ENCODE measurements at regions of chr11 and their contacts with region 1.

Region 1: DNA sequence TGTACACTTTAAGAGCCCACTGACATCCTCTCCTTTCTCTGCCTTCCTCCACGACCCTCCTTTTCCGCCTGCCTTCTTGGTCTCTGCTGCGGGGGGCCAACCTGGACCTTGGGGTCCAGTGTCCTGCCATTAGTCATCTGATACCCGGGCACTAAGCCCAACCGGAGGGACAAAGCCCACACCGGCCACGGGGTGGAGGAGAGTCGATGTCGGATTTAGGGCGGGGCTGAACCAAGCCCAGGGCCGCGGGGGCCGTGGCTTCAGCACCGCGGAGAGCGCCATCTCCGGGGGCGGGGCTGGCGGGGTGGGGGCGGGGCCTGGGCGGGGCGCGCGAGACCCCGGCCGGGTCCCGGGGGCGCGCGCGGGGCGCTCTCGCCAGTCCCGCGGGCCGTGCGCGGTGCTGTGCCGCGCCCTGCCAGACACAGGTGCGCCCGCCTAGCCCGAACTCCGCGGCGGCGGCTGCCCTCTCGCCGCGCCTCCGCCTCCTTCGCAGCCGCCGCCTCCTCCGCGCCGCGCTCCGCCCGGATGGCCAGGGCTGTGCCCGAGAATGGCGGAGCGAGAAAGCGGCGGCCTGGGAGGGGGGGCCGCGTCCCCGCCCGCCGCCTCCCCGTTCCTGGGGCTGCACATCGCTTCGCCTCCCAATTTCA is at the start of gene MAPK8IP1:
- DNase-seq: peak; percentile 68
- ATAC-seq: peak; percentile 89
- H3K4me3 Mint-ChIP-seq: peak within 1 kb of the TSS; percentile 66
- H3K27ac Mint-ChIP-seq: no peak within 1 kb of the TSS
- H3K4me1 Mint-ChIP-seq: peaks cover 8% of the 10 kb centered on the region
- H3K27me3 Mint-ChIP-seq: peaks cover 3% of the 10 kb centered on the region
- total RNA-seq, gene MAPK8IP1: 0.37 to 0.39 TPM

Region 2: DNA sequence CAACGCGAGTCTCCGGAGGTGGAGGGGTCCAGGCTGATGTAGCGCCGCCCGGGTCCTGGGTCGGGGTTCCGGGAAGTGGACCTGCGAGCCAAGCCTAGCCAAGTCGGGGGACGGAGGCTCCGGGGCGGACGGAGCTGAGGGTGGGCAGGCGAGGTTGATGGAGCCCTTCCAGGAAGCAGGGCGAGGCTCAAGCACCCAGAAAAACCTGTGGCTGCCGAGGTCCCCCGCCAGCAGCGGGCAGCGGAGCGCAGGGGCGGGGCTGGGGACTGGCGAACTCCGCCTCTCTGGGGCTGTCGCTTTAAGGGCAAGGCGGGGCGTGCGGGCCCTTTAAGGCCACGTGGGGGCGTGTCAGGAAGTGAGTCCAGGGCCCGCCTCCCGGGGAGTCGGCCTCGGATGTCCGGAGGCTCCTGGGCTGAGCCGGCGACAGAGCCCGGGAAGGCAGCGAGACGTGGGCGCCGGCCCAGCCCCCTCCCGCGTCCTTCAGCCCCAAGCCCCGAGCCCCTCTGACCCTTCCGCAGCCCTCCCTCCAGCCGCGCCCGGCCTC is 80.6 kb before region 1 on chr11 and contains the start of gene SLC35C1:
- CTCF ChIA-PET with region 1: no interaction called
- POLR2A ChIA-PET with region 1: no interaction called
- intact Hi-C with region 1: loop called in 1 of 2 experiments (anchors 1 kb)
- DNase-seq: peak; percentile 98
- ATAC-seq: peak; percentile 97
- H3K4me3 Mint-ChIP-seq: peak within 1 kb of the TSS; percentile 91
- H3K27ac Mint-ChIP-seq: peak within 1 kb of the TSS; percentile 86
- H3K4me1 Mint-ChIP-seq: peaks cover 42% of the 10 kb centered on the region
- H3K27me3 Mint-ChIP-seq: no peaks in the 10 kb centered on the region
- total RNA-seq, gene SLC35C1: 9.6 to 9.8 TPM